ENCODE measurements at regions of chr3 and their contacts with region 1.

Region 1: GRCh38 chr3:11818033-11818432 is 28.7 kb downstream of the TAMM41 start:
- DNase-seq: no peak
- H3K4me3 ChIP-seq: no peak overlapping the region
- H3K27ac ChIP-seq: no peak overlapping the region
- H3K4me1 ChIP-seq: no peaks in the 10 kb centered on the region
- H3K27me3 ChIP-seq: no peaks in the 10 kb centered on the region
- CTCF ChIP-seq: no peak
- EP300 ChIP-seq: no peak
- POLR2A ChIP-seq: no peak

Region 2: DNA sequence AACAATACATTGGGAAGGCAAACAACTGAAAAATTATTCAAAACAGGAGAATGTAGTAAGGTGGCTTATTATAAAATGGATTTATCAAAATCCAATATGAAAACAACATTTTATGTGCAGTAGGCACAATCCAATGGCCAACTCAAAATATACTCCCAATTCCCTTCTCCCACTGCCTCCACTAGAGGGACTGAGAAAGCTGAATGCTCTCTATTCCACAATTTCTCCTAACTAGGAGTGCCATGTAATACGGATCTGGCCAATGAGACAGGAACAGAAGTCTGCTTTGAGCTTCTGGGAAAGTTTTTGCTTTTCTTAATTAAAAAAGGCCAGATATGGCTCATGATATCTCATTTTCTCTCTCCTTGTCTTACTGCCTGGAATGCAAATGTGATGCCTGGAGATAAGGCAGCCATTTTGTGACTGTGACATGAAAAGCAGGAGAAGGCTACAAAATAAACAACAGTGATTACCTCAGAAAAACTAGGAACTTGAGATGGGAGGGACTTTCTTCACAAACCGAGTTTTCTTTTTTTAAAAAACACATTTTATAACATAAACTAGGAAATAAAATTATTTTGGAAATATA is 155.5 kb before region 1 on chr3:
- intact Hi-C with region 1: loop called in 1 of 4 experiments (anchors 10 kb)
- DNase-seq: no peak
- H3K4me3 ChIP-seq: no peak overlapping the region
- H3K27ac ChIP-seq: no peak overlapping the region
- H3K4me1 ChIP-seq: peaks cover 2% of the 10 kb centered on the region
- H3K27me3 ChIP-seq: no peaks in the 10 kb centered on the region
- CTCF ChIP-seq: no peak
- EP300 ChIP-seq: no peak
- POLR2A ChIP-seq: no peak

Region 3: GRCh38 chr3:11770477-11771391 is 47.3 kb before region 1 on chr3:
- intact Hi-C with region 1: no loop called
- DNase-seq: peak; percentile 22 to 52 (median 38)
- H3K4me3 ChIP-seq: no peak overlapping the region
- H3K27ac ChIP-seq: no peak overlapping the region
- H3K4me1 ChIP-seq: peaks cover 2% of the 10 kb centered on the region
- H3K27me3 ChIP-seq: no peaks in the 10 kb centered on the region
- CTCF ChIP-seq: no peak
- EP300 ChIP-seq: no peak
- POLR2A ChIP-seq: no peak

Measured in ovary (tissue), 10 donors.